Activated CD4-positive, alpha-beta memory T cell treated with anti-CD3 and anti-CD28 coated beads for 36 hours (primary cell): ENCODE measurements at regions of chr13 and their contacts with region 1.

Region 1: GRCh38 chr13:98988780-98989179 is 10.9 kb upstream of the DOCK9 start:
- DNase-seq: no peak
- H3K4me3 Mint-ChIP-seq: no peak overlapping the region
- H3K27ac Mint-ChIP-seq: no peak overlapping the region
- H3K4me1 Mint-ChIP-seq: peaks cover 67% of the 10 kb centered on the region
- H3K27me3 Mint-ChIP-seq: no peaks in the 10 kb centered on the region

Region 2: DNA sequence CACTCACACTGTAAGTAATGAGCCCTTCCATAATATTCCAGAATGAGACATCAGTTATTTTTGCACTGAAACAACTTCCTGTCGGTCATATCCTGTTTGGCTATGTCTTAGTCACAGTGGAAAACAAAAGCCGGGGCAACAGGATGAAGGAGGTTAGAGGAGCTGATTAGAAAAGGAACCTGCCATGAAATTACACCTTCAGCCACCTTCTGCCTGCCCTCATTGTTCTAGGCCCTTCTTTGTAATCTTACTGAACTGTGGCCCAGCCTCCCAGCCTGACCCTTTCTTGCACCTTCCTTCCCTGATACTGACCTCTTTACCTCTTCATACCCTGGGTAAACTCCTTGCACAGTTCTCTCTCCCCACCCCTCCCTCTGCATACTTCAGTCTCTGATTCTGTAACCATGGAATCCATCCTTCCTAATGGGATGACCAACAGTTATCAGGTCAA is 78.3 kb before region 1 on chr13:
- CTCF ChIA-PET with region 1: no interaction called
- POLR2A ChIA-PET with region 1: no interaction called
- intact Hi-C with region 1: loop called (anchors 2 kb)
- DNase-seq: peak; percentile 64
- H3K4me3 Mint-ChIP-seq: no peak overlapping the region
- H3K27ac Mint-ChIP-seq: peak overlapping the region; percentile 94
- H3K4me1 Mint-ChIP-seq: peaks cover 60% of the 10 kb centered on the region
- H3K27me3 Mint-ChIP-seq: no peaks in the 10 kb centered on the region

Region 3: GRCh38 chr13:99087096-99087953 is 98.5 kb after region 1 on chr13:
- CTCF ChIA-PET with region 1: no interaction called
- POLR2A ChIA-PET with region 1: no interaction called
- intact Hi-C with region 1: no loop called
- DNase-seq: peak; percentile 95
- H3K4me3 Mint-ChIP-seq: peak overlapping the region; percentile 99
- H3K27ac Mint-ChIP-seq: peak overlapping the region; percentile 97
- H3K4me1 Mint-ChIP-seq: peaks cover 32% of the 10 kb centered on the region
- H3K27me3 Mint-ChIP-seq: no peaks in the 10 kb centered on the region